ENCODE measurements at regions of chr4 and their contacts with region 1.

Region 1: DNA sequence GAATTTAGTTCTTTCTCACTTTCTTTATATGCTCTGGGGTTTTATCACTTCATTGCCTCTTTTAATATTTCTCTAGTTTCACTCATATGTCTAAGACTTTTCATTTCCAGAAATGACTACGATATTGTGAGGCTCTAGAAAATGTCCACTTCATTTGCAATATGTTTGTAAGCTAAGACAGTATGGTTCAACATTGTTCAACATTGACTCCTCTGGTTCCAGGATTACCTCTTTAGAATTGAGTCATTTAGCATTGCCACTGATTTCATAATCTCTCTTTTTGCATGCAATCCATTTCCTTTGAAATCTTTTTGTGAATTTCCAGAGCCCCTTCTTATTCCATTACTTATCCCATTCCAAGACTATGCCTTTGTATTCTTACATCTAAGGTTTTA is 32.3 kb downstream of the BBS12 start:
- DNase-seq: no peak
- ATAC-seq: no peak
- H3K4me3 ChIP-seq: no peak overlapping the region
- H3K27ac ChIP-seq: peak overlapping the region in 1 of 10 donors; percentile 0
- H3K4me1 ChIP-seq: peaks cover 0 to 24% (median 15%) of the 10 kb centered on the region in 9 donors
- H3K27me3 ChIP-seq: no peaks in the 10 kb centered on the region
- CTCF ChIP-seq: no peak

Region 2: GRCh38 chr4:122732329-122733026 is 32.3 kb before region 1 on chr4 and contains the start of gene BBS12:
- intact Hi-C with region 1: no loop called
- DNase-seq: peak; percentile 97 to 99
- ATAC-seq: peak; percentile 99 to 100 (median 99)
- H3K4me3 ChIP-seq: peak within 1 kb of the TSS; percentile 23 to 84 (median 70)
- H3K27ac ChIP-seq: peak within 1 kb of the TSS in 9 of 10 donors; percentile 52 to 87 (median 81)
- H3K4me1 ChIP-seq: peaks cover 3 to 31% (median 12%) of the 10 kb centered on the region in 9 donors
- H3K27me3 ChIP-seq: no peaks in the 10 kb centered on the region
- CTCF ChIP-seq: peak in 7 of 9 donors; percentile 14 to 65 (median 44)
- total RNA-seq, gene BBS12: 3.3 to 13.3 (median 5.2) TPM

Region 3: GRCh38 chr4:122798101-122798500 is 33.3 kb after region 1 on chr4:
- intact Hi-C with region 1: loop called in 1 of 10 experiments (anchors 5 kb)
- DNase-seq: peak; percentile 23 to 70
- ATAC-seq: peak; percentile 81 to 97 (median 94)
- H3K4me3 ChIP-seq: peak overlapping the region in 5 of 10 donors; percentile 6 to 38 (median 23)
- H3K27ac ChIP-seq: peak overlapping the region in 9 of 10 donors; percentile 28 to 88 (median 66)
- H3K4me1 ChIP-seq: peaks cover 0 to 26% (median 21%) of the 10 kb centered on the region in 9 donors
- H3K27me3 ChIP-seq: no peaks in the 10 kb centered on the region
- CTCF ChIP-seq: peak in 4 of 9 donors; percentile 7 to 44 (median 28)

Region 4: GRCh38 chr4:122914292-122914904 is 149.6 kb after region 1 on chr4:
- intact Hi-C with region 1: loop called in 1 of 10 experiments (anchors 5 kb)
- DNase-seq: no peak
- ATAC-seq: peak in 6 of 8 donors; percentile 55 to 73 (median 56)
- H3K4me3 ChIP-seq: no peak overlapping the region
- H3K27ac ChIP-seq: no peak overlapping the region
- H3K4me1 ChIP-seq: no peaks in the 10 kb centered on the region
- H3K27me3 ChIP-seq: no peaks in the 10 kb centered on the region
- CTCF ChIP-seq: peak in 7 of 9 donors; percentile 12 to 57 (median 52)